ENCODE measurements at regions of chr4 and their contacts with region 1.

Region 1: GRCh38 chr4:128517739-128518510 is 230.3 kb upstream of the PGRMC2 start:
- DNase-seq: peak; percentile 98
- ATAC-seq: peak; percentile 89
- H3K4me3 ChIP-seq: no peak overlapping the region
- H3K27ac ChIP-seq: peak overlapping the region; percentile 94
- H3K4me1 ChIP-seq: peaks cover 26% of the 10 kb centered on the region
- H3K27me3 ChIP-seq: no peaks in the 10 kb centered on the region
- CTCF ChIP-seq: no peak
- POLR2A ChIP-seq: peak; percentile 28; the same call in 1 of the 2 replicates
- RAD21 ChIP-seq: no peak

Region 2: DNA sequence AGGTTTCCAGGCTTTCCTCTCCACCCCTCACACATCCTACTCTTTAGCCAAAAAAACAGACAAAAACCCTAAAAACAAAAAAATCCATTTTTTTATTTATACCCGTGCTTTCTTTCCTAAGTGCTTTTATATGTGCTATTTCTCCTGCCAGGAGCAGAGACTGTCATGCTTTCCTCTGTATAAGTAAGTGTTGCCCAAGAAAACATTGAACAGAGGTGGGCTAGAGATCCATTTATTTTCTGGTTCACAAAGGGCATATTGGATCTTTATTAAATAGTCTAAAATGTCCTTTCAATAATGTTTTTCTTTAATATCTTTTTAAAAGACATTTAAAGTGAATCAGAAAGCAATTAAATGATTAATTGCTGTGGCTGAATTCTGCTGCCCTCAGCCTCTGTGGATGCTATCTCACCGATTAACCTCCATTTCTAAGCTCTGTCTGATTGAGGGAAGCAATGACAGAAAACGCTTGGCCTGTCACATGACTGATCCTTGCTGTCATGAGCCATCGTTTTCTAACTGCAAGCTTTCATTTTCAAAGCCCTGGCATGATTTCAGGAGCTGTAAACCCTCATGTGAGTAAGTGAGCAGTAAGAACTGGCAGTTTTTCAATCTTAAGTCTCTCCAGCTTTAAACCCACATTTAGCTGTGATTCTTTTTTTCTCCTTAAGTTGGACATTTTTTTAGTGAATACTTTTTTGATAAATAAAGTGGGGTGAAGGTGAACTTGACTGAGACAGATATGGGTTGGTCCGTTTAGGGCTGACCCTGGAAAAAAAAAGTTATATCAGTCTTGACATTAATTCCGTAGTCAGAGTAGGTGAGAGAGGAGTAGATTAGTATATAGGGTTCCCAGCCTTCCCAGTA is 49.6 kb before region 1 on chr4:
- CTCF ChIA-PET with region 1: interaction called, 3 read pairs
- POLR2A ChIA-PET with region 1: no interaction called
- dilution Hi-C with region 1: no loop called
- in situ Hi-C with region 1: no loop called
- intact Hi-C with region 1: loop called (anchors 5 kb)
- DNase-seq: peak; percentile 99
- ATAC-seq: peak; percentile 89
- H3K4me3 ChIP-seq: no peak overlapping the region; the same call in 1 of the 2 replicates
- H3K27ac ChIP-seq: peak overlapping the region; percentile 39; the same call in 1 of the 2 replicates
- H3K4me1 ChIP-seq: peaks cover 9% of the 10 kb centered on the region
- H3K27me3 ChIP-seq: no peaks in the 10 kb centered on the region
- CTCF ChIP-seq: no peak
- POLR2A ChIP-seq: peak; percentile 22; the same call in 1 of the 2 replicates
- RAD21 ChIP-seq: no peak

Region 3: DNA sequence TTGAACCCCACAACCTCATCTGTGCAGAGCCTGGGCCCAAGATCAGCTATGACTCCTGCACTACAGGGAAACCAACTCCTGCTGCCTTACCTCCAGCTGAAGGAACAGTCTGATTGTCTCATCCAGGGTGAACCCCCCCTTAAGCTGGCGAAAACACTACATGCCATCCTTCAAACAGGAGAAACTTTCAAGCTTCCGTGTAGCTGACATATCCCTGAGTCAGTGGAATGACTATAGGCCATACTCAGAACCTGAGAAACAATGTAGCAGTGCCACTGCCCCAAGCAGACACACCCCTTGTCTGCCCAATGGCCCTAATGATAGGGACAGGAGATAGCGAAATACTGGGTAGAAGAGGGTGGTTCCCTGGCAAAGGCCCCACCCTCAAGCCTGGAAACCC is 16.7 kb before region 1 on chr4:
- CTCF ChIA-PET with region 1: no interaction called
- POLR2A ChIA-PET with region 1: no interaction called
- dilution Hi-C with region 1: no loop called
- in situ Hi-C with region 1: no loop called
- intact Hi-C with region 1: no loop called
- DNase-seq: no peak
- ATAC-seq: no peak
- H3K4me3 ChIP-seq: no peak overlapping the region
- H3K27ac ChIP-seq: no peak overlapping the region
- H3K4me1 ChIP-seq: no peaks in the 10 kb centered on the region
- H3K27me3 ChIP-seq: no peaks in the 10 kb centered on the region
- CTCF ChIP-seq: no peak
- POLR2A ChIP-seq: no peak
- RAD21 ChIP-seq: no peak

Region 4: GRCh38 chr4:128553686-128554515 is 36.0 kb after region 1 on chr4:
- CTCF ChIA-PET with region 1: interaction called, 3 read pairs
- POLR2A ChIA-PET with region 1: no interaction called
- dilution Hi-C with region 1: no loop called
- in situ Hi-C with region 1: no loop called
- intact Hi-C with region 1: loop called (anchors 2 kb)
- DNase-seq: no peak
- ATAC-seq: no peak; the same call in 1 of the 2 replicates
- H3K4me3 ChIP-seq: peak overlapping the region; percentile 53; the same call in 1 of the 2 replicates
- H3K27ac ChIP-seq: peak overlapping the region; percentile 88; the same call in 1 of the 2 replicates
- H3K4me1 ChIP-seq: peaks cover 14% of the 10 kb centered on the region
- H3K27me3 ChIP-seq: no peaks in the 10 kb centered on the region
- CTCF ChIP-seq: no peak
- POLR2A ChIP-seq: no peak
- RAD21 ChIP-seq: no peak

Region 5: GRCh38 chr4:128574706-128575105 is 56.8 kb after region 1 on chr4:
- CTCF ChIA-PET with region 1: no interaction called
- POLR2A ChIA-PET with region 1: no interaction called
- dilution Hi-C with region 1: no loop called
- in situ Hi-C with region 1: no loop called
- intact Hi-C with region 1: loop called (anchors 5 kb)
- DNase-seq: peak; percentile 68
- ATAC-seq: peak; percentile 25
- H3K4me3 ChIP-seq: no peak overlapping the region
- H3K27ac ChIP-seq: no peak overlapping the region
- H3K4me1 ChIP-seq: peaks cover 22% of the 10 kb centered on the region
- H3K27me3 ChIP-seq: no peaks in the 10 kb centered on the region
- CTCF ChIP-seq: peak; percentile 58
- POLR2A ChIP-seq: no peak
- RAD21 ChIP-seq: peak; percentile 55

Region 6: DNA sequence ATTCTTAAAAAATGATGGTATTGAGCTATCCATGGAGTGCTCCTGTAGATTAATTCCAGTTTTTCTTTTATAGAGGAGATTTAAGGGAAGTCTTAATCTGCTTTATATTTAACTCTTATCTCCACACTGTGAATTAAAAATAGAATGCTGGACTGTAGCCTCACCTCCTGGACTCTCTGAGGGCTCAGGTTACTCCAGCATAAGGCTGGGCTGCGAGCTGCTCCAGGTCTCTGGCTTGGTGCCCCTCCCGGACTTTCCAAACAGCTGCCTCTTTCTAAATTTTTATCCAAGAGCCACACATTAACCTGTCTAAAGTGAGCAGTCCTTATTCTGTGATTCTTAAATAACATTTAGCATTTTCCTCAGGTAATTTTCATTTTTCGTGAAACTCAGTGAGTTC is 72.8 kb after region 1 on chr4:
- CTCF ChIA-PET with region 1: no interaction called
- POLR2A ChIA-PET with region 1: no interaction called
- dilution Hi-C with region 1: no loop called
- in situ Hi-C with region 1: no loop called
- intact Hi-C with region 1: no loop called
- DNase-seq: peak; percentile 37
- ATAC-seq: no peak
- H3K4me3 ChIP-seq: no peak overlapping the region
- H3K27ac ChIP-seq: no peak overlapping the region
- H3K4me1 ChIP-seq: no peaks in the 10 kb centered on the region
- H3K27me3 ChIP-seq: no peaks in the 10 kb centered on the region
- CTCF ChIP-seq: 0 out of 2 replicates have a peak, but pooled peaks have one; percentile 4
- POLR2A ChIP-seq: no peak
- RAD21 ChIP-seq: no peak